ENCODE measurements at regions of chr21 and their contacts with region 1.

Region 1: DNA sequence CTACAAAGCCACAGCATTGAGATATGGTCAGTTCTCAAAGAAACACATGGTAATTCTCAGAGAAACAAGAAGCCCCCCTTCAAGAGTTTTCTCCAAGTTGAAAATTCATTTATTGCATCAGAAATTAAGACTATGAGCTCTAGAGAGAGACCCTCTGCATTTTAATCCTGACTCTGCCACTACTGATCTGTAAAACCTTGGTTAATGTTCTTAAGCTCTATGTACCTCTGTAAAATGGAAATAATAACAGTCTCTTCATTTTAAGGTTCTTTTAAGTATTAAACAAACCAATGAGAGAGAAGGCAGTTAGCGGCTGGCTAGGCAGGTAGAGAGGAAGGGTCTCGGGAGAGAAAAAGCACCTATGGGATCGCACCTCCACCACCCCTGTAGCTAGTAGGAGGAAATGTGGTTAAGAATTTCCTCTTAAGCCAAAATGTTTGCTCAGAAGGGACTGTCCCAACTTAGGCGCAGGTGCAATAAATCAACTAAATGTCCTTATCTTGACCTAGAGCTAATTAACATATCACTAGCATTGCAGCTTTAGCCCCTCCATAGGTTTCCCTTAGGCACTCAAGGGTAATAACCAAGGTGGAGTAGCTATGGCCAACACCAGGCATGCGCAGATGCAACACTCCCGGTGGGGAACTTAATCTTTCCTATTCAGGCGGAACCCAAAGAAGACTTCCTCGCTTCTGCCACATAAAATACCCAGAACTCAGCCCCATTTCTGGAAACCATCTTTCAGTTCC is 1685.4 kb downstream of the MRPL39 start:
- DNase-seq: no peak
- ATAC-seq: peak; percentile 87
- H3K4me3 Mint-ChIP-seq: peak overlapping the region; percentile 60
- H3K27ac Mint-ChIP-seq: peak overlapping the region; percentile 10
- H3K4me1 Mint-ChIP-seq: peaks cover 25% of the 10 kb centered on the region
- H3K27me3 Mint-ChIP-seq: no peaks in the 10 kb centered on the region
- CTCF ChIP-seq: no peak

Region 2: DNA sequence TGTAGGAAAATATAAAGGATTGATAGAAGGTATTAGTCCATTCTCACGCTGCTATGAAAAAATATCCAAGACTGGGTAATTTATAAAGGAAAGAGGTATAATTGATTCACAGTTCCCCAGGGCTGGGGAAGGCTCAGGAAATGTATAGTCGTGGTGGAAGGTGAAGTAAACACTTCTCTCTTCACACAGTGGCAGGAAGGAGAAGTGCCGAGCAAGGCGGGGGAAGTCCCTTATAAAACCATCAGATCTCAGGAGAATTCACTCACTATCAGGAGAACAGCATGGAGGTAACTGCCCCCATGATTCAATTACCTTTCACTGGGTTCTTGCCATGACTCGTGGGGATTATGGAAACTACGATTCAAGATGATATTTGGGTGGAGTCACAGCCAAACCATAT is 120.6 kb before region 1 on chr21:
- CTCF ChIA-PET with region 1: no interaction called
- POLR2A ChIA-PET with region 1: no interaction called
- intact Hi-C with region 1: loop called (anchors 5 kb)
- DNase-seq: no peak
- ATAC-seq: peak; percentile 64
- H3K4me3 Mint-ChIP-seq: no peak overlapping the region
- H3K27ac Mint-ChIP-seq: no peak overlapping the region
- H3K4me1 Mint-ChIP-seq: peaks cover 9% of the 10 kb centered on the region
- H3K27me3 Mint-ChIP-seq: no peaks in the 10 kb centered on the region
- CTCF ChIP-seq: no peak

Region 3: DNA sequence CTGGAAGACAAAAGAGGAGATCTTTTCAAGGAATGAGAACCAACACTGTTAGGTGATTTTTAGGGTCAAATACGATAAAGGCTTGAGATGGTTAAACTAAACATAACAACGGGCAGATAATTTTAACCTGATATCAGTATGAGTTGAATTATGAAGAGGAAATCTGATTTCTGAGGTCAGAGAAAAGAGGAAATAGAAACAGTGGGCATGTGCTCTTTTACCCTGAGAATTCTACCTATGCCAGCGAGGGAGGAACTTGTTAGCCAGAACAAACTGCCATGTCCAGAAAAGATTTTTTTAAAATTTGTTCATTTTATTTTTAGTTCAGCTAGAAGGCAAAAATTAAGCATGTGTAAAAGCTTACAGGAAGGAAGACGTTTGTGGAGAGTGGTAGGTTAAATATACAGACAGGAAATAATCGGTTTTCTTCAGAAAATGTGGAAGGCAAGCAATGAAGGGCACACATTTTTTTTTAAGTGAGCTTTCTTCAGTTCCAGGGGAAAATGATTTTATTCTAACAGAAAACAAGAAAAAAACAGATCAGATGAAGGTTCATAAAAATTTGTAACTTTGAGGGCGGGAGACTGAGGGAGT is 59.8 kb before region 1 on chr21:
- CTCF ChIA-PET with region 1: no interaction called
- POLR2A ChIA-PET with region 1: no interaction called
- intact Hi-C with region 1: loop called (anchors 5 kb)
- DNase-seq: no peak
- ATAC-seq: peak; percentile 71
- H3K4me3 Mint-ChIP-seq: peak overlapping the region; percentile 29
- H3K27ac Mint-ChIP-seq: peak overlapping the region; percentile 75
- H3K4me1 Mint-ChIP-seq: peaks cover 39% of the 10 kb centered on the region
- H3K27me3 Mint-ChIP-seq: no peaks in the 10 kb centered on the region
- CTCF ChIP-seq: no peak

Region 4: DNA sequence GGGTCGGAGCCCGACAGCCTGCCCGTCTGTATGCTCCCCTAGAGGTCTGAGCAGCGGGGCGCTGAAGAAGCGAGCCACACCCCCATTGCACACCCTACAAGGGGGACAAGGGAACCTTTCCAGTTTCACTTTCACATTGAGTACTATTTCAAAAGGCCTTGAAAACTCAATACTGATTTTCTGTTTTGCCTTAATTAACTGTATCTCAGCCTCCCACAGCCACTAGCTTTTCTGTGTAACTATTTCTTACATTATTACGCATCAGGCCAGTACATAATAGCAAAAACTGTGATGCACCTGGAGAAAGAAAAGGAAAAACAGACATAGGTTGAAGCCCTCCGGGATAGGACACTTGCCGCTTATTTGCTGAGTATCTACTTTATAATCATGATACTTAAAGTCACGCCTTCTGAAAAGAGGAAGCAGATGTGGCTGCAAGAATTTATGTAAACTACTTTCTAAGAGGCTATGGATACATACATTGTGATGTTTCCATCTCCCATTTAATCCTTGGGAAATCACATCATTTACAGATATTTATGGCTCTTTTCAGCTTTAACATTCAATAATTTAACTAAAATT is 34.0 kb before region 1 on chr21:
- CTCF ChIA-PET with region 1: no interaction called
- POLR2A ChIA-PET with region 1: no interaction called
- intact Hi-C with region 1: loop called (anchors 1 kb)
- DNase-seq: peak; percentile 37
- ATAC-seq: peak; percentile 90
- H3K4me3 Mint-ChIP-seq: peak overlapping the region; percentile 86
- H3K27ac Mint-ChIP-seq: peak overlapping the region; percentile 92
- H3K4me1 Mint-ChIP-seq: peaks cover 15% of the 10 kb centered on the region
- H3K27me3 Mint-ChIP-seq: no peaks in the 10 kb centered on the region
- CTCF ChIP-seq: no peak

Region 5: DNA sequence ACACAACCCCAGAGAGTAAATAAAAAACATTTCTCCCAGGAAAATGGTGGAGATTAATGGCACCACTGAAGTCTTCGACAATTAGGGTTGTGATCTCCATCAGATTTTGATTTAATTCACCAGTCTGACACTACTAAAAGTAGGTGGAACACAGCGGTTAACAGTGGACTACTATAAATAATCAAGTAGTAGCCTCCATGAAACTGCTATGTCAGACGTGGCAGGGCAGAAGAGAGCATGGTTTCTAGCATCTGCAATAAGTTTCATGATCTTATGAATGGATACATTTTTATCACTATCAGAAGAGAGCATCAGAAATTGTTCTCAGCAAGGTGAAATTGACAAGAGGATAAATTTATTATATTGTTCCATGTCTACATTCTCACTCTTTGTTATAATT is 21.1 kb before region 1 on chr21:
- CTCF ChIA-PET with region 1: no interaction called
- POLR2A ChIA-PET with region 1: no interaction called
- intact Hi-C with region 1: no loop called
- DNase-seq: no peak
- ATAC-seq: no peak
- H3K4me3 Mint-ChIP-seq: no peak overlapping the region
- H3K27ac Mint-ChIP-seq: no peak overlapping the region
- H3K4me1 Mint-ChIP-seq: no peaks in the 10 kb centered on the region
- H3K27me3 Mint-ChIP-seq: no peaks in the 10 kb centered on the region
- CTCF ChIP-seq: no peak

Region 6: DNA sequence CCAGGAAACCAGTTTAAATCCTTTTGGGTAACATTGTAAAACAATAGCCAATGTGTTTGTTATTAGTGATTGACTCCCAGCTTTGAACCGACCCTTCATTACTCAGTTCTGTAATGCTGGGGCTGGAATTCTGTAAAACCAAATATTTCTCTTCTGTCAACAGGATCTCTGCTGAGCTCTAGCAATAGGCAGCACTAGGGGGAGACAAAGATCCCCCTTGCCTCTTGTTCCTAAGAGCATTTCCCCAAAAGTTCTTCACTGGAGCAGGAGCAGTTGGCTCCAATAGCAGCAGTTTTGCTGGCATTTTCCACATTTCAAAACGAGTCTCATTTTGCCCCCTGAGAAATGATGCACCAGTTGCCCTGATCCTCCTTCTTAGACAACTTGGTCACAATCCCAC is 14.4 kb after region 1 on chr21:
- CTCF ChIA-PET with region 1: no interaction called
- POLR2A ChIA-PET with region 1: interaction called, 6 read pairs
- intact Hi-C with region 1: loop called (anchors 1 kb)
- DNase-seq: no peak
- ATAC-seq: no peak
- H3K4me3 Mint-ChIP-seq: no peak overlapping the region
- H3K27ac Mint-ChIP-seq: peak overlapping the region; percentile 46
- H3K4me1 Mint-ChIP-seq: peaks cover 19% of the 10 kb centered on the region
- H3K27me3 Mint-ChIP-seq: no peaks in the 10 kb centered on the region
- CTCF ChIP-seq: no peak

Region 7: DNA sequence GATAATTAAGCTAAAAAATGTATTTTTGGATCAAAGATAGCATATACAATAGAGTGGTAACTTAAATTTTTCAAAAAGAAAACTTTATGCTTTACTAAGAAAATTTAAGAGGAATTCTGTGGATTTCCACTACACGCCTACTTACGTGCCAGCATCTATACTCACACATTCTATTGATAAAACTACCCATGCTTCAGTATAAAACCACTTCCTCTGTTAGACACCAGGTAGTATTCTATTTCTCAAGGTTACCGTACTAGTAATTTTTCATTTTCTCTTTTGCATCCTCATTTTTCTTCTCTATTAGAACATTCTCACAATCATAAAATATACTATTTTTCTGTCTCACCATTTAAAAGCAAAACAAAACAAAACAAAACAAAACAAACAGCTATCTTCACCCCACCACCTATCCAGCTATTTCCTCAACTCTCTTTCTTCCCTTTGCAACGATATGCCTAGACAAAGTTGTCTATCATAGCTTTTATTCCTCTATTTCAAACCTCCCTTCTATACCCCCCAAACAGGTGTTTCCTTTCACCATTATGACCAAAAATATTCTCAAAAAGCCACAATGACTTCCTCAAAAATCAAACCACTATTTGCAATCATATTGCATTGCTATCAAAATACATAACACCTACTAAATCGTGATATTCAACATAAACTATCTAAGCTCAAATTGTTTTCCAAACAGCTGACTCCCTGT is 33.4 kb after region 1 on chr21:
- CTCF ChIA-PET with region 1: no interaction called
- POLR2A ChIA-PET with region 1: no interaction called
- intact Hi-C with region 1: loop called (anchors 5 kb)
- DNase-seq: no peak
- ATAC-seq: no peak
- H3K4me3 Mint-ChIP-seq: peak overlapping the region; percentile 68
- H3K27ac Mint-ChIP-seq: peak overlapping the region; percentile 50
- H3K4me1 Mint-ChIP-seq: peaks cover 44% of the 10 kb centered on the region
- H3K27me3 Mint-ChIP-seq: no peaks in the 10 kb centered on the region
- CTCF ChIP-seq: no peak

Region 8: GRCh38 chr21:24127651-24128050 is 205.8 kb after region 1 on chr21:
- CTCF ChIA-PET with region 1: no interaction called
- POLR2A ChIA-PET with region 1: no interaction called
- intact Hi-C with region 1: no loop called
- DNase-seq: no peak
- ATAC-seq: no peak
- H3K4me3 Mint-ChIP-seq: no peak overlapping the region
- H3K27ac Mint-ChIP-seq: no peak overlapping the region
- H3K4me1 Mint-ChIP-seq: no peaks in the 10 kb centered on the region
- H3K27me3 Mint-ChIP-seq: no peaks in the 10 kb centered on the region
- CTCF ChIP-seq: no peak

Measured in activated B cell treated with CpG ODN at 0.5 μM for 24 hours (primary cell).